OCI-LY7 (cell line): ENCODE measurements at regions of chr17 and their contacts with region 1.

Region 1: GRCh38 chr17:47663912-47664625 is 14.3 kb downstream of the KPNB1 start:
- DNase-seq: peak; percentile 77
- H3K4me3 ChIP-seq: peak overlapping the region; percentile 29
- H3K27ac ChIP-seq: peak overlapping the region; percentile 75
- H3K4me1 ChIP-seq: peaks cover 42% of the 10 kb centered on the region
- CTCF ChIP-seq: peak; percentile 97

Region 2: DNA sequence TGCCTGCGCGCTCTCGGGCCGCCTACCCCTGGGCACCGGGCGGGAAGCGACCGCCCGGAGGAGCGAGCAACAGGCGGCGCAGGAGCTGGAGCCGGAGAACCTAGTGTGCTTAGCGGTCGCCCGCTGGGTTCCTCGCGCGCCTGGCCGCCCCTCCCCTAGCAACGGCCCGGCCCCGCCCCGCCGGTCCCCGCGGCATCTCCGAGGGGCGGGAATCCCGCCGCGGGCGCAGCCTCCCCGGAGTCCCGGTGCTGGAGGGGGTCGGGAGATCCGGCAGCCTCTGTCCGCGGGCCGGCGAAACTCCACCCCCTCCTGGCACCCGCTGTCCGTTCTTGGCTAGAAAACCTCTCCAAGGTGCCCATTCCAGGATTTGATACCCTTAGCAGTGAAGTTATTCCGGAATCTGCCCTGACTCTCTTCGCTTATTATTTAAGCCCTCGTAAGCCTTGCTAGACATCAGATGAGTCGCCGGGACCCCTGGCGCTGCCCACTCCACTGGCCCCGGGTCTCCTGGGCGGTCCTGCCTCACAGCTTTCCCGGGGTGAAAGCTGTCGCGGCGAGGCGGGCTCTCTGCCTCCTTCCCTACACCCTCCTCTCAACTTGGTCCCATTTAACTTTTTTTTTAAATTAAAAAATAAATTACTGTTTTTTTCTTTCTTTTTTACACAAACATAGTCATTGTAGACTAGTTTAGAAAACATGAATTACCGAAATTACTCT is 684.8 kb before region 1 on chr17 and contains the start of gene RPRML:
- CTCF ChIA-PET with region 1: no interaction called
- POLR2A ChIA-PET with region 1: no interaction called
- intact Hi-C with region 1: no loop called
- DNase-seq: peak; percentile 73
- H3K4me3 ChIP-seq: peak within 1 kb of the TSS; percentile 70
- H3K27ac ChIP-seq: peak within 1 kb of the TSS; percentile 19
- H3K4me1 ChIP-seq: peaks cover 46% of the 10 kb centered on the region
- CTCF ChIP-seq: no peak
- total RNA-seq, gene RPRML: 8.8 and 12.8 TPM in 2 replicates

Region 3: DNA sequence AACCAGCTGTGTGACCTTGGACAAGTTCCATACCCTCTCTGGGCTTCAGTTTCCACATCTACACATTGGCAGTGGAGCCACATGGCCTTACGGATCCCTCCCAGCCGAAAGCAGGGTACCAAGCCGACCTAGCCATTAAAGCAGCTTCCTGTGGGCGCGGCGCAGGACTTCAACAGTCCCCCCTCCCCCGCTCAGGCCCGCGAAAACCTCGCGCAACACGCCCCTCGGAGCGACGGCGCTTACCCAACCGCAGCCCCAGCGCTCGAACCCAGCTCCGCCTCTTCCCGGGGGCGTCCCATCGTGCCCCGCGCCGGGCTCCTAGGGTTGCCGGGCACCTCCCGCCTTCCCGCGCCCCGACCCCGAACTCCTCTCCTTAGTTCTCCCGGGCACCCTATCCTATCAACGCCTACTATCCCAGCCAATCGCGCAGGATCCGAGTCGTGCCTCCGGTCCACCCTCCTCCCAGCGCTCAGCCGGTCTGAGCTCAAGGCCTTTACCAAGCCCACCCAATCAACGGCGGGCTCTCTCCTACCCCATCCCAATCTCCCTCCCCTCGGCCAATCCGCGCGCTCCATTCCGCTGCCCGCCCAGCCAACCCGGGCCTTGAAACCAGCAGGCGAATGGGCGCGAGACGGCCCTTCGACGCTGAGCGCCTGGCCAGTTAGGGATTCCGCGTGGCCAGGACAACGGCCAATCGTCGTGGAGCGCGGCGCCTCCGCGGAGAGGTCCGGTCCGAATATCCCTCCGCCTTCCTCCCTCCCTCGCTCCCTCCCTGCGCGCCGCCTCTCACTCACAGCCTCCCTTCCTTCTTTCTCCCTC is 14.7 kb before region 1 on chr17 and contains the start of gene KPNB1:
- CTCF ChIA-PET with region 1: no interaction called
- POLR2A ChIA-PET with region 1: interaction called, 10 read pairs
- intact Hi-C with region 1: no loop called
- DNase-seq: peak; percentile 99
- H3K4me3 ChIP-seq: peak within 1 kb of the TSS; percentile 81
- H3K27ac ChIP-seq: peak within 1 kb of the TSS; percentile 92
- H3K4me1 ChIP-seq: peaks cover 44% of the 10 kb centered on the region
- CTCF ChIP-seq: no peak
- total RNA-seq, gene KPNB1: 215 and 232 TPM in 2 replicates

Region 4: DNA sequence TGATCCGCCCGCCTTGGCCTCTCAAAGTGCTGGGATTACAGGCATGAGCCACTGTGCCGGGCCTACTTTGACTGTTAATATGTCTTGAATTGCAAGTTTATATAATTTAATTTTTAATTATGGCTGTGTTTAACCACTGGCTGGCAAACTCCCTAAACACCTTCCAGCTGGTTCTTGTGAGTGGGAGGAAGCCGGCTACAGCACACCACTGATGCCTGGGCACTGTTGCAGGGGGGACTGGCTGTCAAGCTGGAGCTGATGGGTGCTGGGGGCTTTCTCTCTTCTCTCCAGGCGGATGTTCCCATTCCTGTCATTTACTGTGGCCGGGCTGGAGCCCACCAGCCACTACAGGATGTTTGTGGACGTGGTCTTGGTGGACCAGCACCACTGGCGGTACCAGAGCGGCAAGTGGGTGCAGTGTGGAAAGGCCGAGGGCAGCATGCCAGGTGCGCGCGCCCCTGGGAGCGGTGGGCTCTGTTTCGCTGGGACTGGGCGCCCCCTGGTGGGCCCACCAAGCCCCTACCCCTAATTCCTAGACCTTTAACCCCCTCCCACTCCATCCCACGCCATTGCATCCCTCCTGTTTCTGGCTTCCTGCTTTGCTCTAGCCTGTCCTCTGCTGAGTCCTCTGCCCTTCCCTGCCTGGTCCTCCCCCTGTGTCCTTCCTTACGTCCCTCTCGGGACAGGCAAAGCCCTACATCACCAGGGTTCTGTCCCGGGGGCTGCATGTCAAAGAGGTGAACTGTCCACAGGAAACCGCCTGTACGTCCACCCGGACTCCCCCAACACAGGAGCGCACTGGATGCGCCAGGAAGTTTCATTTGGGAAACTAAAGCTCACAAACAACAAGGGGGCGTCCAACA is 78.5 kb after region 1 on chr17:
- CTCF ChIA-PET with region 1: no interaction called
- POLR2A ChIA-PET with region 1: no interaction called
- intact Hi-C with region 1: loop called (anchors 1 kb)
- DNase-seq: peak; percentile 61
- H3K4me3 ChIP-seq: no peak overlapping the region
- H3K27ac ChIP-seq: no peak overlapping the region
- H3K4me1 ChIP-seq: peaks cover 3% of the 10 kb centered on the region
- CTCF ChIP-seq: peak; percentile 86